ENCODE measurements at regions of chr11 and their contacts with region 1.

Region 1: GRCh38 chr11:120682866-120683265 is 171.3 kb downstream of the GRIK4 start:
- DNase-seq: no peak
- H3K4me3 ChIP-seq: no peak overlapping the region
- H3K27ac ChIP-seq: no peak overlapping the region
- H3K4me1 ChIP-seq: no peaks in the 10 kb centered on the region
- H3K27me3 ChIP-seq: peaks cover 3 to 6% of the 10 kb centered on the region in 2 experiments
- CTCF ChIP-seq: no peak
- POLR2A ChIP-seq: no peak

Region 2: GRCh38 chr11:120335908-120336640 is 346.8 kb before region 1 on chr11 and contains the start of gene ARHGEF12:
- CTCF ChIA-PET with region 1: interaction called, 4 read pairs
- POLR2A ChIA-PET with region 1: no interaction called
- dilution Hi-C with region 1: no loop called
- intact Hi-C with region 1: loop called (anchors 10 kb)
- DNase-seq: peak; percentile 95
- H3K4me3 ChIP-seq: peak within 1 kb of the TSS; percentile 82 to 98 (median 96)
- H3K27ac ChIP-seq: peak within 1 kb of the TSS; percentile 87
- H3K4me1 ChIP-seq: peaks cover 40% of the 10 kb centered on the region
- H3K27me3 ChIP-seq: no peaks in the 10 kb centered on the region
- CTCF ChIP-seq: peak; percentile 42 to 56
- POLR2A ChIP-seq: peak; percentile 80
- total RNA-seq, gene ARHGEF12: 117 and 125 TPM in 2 replicates

Region 3: GRCh38 chr11:120511116-120511819 is 171.6 kb before region 1 on chr11 and contains the start of gene GRIK4:
- CTCF ChIA-PET with region 1: interaction called, 289 read pairs
- POLR2A ChIA-PET with region 1: no interaction called
- dilution Hi-C with region 1: no loop called
- intact Hi-C with region 1: loop called (anchors 1 kb)
- DNase-seq: peak; percentile 64
- H3K4me3 ChIP-seq: peak within 1 kb of the TSS in 1 of 3 experiments; percentile 25
- H3K27ac ChIP-seq: no peak within 1 kb of the TSS
- H3K4me1 ChIP-seq: no peaks in the 10 kb centered on the region
- H3K27me3 ChIP-seq: peaks cover 7 to 12% of the 10 kb centered on the region in 2 experiments
- CTCF ChIP-seq: peak; percentile 89 to 94
- POLR2A ChIP-seq: no peak
- total RNA-seq, gene GRIK4: 0.74 and 1.6 TPM in 2 replicates

Region 4: DNA sequence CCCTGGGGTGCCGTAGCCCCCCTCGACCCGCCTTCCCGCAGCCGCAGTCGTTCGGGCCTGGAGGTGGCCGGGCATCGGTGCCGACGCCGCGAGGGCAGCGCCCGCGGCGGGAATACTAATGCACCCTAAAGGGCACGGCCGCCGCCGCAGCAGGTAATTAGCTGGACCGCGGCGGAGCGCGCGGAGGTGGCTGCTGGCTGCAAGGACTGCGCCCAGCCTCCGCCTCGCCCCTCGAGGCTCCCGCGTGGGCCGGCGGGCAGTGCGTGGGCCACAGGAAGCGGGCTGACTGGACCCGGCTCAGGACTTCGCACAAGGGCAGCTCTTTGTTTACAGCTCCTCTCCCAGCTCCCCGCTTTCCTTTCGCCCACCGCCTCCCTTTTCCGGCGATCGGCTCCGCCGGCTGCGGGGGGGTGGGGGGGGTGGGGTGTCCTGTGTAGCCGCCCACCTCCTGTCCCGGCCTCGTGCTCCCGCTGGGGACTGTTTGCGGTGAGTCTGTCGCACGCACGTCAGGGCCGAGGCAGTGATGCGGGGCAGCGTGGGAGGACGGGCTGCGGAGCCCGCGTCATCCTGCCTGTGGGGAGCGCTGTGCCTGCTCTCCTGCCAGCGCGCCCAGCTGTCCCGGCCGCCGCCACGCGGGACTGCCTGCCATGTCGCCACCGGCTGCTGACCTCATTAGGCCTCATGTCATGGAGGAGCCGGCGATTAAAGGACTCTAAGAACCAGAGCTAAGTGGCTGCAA is 118.1 kb before region 1 on chr11:
- CTCF ChIA-PET with region 1: interaction called, 27 read pairs
- POLR2A ChIA-PET with region 1: no interaction called
- dilution Hi-C with region 1: no loop called
- intact Hi-C with region 1: no loop called
- DNase-seq: peak; percentile 45
- H3K4me3 ChIP-seq: peak overlapping the region in 2 of 3 experiments; percentile 24 to 39
- H3K27ac ChIP-seq: peak overlapping the region; percentile 88
- H3K4me1 ChIP-seq: peaks cover 25% of the 10 kb centered on the region
- H3K27me3 ChIP-seq: no peaks in the 10 kb centered on the region
- CTCF ChIP-seq: peak in 1 of 2 donors; percentile 30
- POLR2A ChIP-seq: no peak

Region 5: DNA sequence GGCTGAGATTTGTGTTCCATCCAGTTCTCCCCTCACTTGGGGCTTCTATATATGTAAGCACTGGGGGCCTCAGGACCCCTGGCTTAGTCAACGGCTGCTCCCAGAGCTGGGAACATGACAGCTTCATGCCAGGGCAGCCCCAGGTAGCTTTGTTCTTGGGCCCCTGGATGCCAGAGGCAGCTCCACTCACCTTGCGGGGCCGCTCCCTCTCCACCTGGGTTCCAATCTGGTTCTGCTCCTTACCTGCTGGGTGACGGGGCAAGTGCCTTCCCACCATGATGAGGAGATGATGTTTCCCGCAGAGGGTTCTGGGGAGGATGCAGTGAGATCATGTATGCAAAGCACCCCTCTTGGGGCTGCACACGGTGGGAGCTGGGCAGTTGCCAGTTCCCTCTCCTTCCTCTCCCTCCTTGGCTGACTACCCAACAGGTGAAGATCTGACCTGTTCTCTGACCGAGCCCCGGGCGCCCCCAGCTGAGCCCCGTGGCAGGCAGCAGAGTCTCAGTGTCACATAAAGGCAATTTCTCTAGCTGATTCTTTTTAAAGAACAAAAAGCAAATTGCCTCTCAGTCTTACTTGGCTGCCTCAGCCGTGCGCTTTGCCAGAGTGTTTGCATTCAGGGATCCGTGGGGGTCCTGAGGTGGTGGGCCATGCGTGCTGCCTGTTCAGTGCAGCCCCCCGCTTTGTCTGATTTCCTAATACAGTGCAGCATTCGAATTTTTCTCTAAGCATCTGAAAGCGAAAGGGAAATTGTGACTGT is 85.7 kb before region 1 on chr11:
- CTCF ChIA-PET with region 1: no interaction called
- POLR2A ChIA-PET with region 1: no interaction called
- dilution Hi-C with region 1: no loop called
- intact Hi-C with region 1: no loop called
- DNase-seq: no peak
- H3K4me3 ChIP-seq: no peak overlapping the region
- H3K27ac ChIP-seq: no peak overlapping the region
- H3K4me1 ChIP-seq: no peaks in the 10 kb centered on the region
- H3K27me3 ChIP-seq: no peaks in the 10 kb centered on the region
- CTCF ChIP-seq: no peak
- POLR2A ChIP-seq: no peak

Region 6: DNA sequence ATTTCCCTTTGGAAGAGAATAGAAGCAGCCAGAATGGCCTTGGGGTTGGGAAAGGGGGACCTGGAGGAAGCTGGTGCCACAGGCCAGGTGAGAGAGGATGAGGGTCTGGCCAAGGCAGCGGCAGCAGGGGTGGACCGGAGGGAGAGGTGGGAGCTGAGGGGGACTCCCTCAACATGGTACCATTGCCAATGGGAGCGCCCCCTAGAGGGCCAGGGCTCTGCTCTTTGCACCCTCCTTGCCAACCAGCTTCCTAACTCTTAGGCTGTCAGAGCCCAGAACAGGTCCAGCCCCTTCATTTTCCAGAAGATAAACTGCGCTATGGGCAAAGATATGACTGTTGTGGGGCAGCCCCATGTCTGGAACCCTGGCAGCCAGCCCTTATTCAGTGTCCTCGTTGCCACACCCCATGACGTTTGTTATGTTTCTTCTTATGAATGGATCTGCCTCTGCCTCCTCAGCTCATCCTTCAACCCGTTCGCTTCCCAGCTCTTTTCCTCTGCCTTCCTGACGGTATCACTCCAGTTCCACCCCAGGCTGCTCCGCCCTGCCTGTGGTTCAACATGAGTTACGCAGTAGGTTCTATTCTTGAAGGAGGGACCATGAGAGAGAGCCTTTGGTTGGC is 13.8 kb after region 1 on chr11:
- CTCF ChIA-PET with region 1: interaction called, 40 read pairs
- POLR2A ChIA-PET with region 1: no interaction called
- dilution Hi-C with region 1: no loop called
- intact Hi-C with region 1: no loop called
- DNase-seq: no peak
- H3K4me3 ChIP-seq: no peak overlapping the region
- H3K27ac ChIP-seq: no peak overlapping the region
- H3K4me1 ChIP-seq: no peaks in the 10 kb centered on the region
- H3K27me3 ChIP-seq: no peaks in the 10 kb centered on the region
- CTCF ChIP-seq: no peak
- POLR2A ChIP-seq: no peak

Region 7: DNA sequence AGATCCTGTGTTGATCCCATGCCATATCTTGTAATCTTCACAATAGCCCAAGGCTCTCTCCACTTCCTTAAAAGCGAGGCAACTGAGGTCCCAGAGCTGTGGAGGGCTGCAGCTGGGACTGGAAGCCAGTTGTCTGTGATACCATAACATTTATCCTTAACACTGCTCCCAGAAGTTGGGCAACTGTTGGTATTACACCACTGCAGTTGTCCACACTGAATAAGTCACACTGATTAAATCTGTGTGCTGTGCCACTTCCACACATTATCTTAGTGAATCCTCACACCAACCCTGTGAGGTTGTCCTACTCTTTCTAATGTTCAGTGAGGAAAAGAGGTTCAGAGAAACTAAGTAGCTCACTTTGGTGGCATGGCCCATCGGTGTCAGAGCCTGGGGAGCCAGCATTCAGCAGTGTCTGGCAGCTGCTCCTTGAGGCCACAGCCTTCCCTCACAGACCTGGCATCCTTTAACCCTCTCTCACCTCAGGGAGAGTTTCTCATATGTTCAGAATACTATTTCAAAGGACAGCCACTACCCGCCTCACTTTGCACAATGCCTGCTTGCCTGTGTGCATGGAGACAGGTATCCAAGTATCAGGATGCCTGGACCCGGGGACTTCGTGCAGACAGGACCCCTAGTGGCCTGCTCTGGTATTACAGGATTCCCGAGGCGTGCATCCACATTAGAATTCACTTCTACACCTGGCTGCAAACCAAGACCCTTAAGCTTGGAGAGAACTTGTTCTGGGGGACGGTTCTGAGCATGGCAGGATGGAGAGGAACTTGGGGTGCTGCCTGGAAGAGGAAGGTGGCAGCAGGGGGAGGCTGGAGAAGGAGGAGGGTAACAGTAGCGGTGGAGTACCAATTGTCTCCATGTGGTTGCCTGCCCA is 119.2 kb after region 1 on chr11:
- CTCF ChIA-PET with region 1: interaction called, 34 read pairs
- POLR2A ChIA-PET with region 1: no interaction called
- dilution Hi-C with region 1: no loop called
- intact Hi-C with region 1: loop called (anchors 1 kb)
- DNase-seq: peak; percentile 58
- H3K4me3 ChIP-seq: no peak overlapping the region
- H3K27ac ChIP-seq: no peak overlapping the region
- H3K4me1 ChIP-seq: peaks cover 2% of the 10 kb centered on the region
- H3K27me3 ChIP-seq: no peaks in the 10 kb centered on the region
- CTCF ChIP-seq: peak; percentile 89 to 91
- POLR2A ChIP-seq: no peak

Region 8: GRCh38 chr11:121194731-121195596 is 512.1 kb after region 1 on chr11:
- CTCF ChIA-PET with region 1: interaction called, 16 read pairs
- POLR2A ChIA-PET with region 1: no interaction called
- dilution Hi-C with region 1: no loop called
- intact Hi-C with region 1: no loop called
- DNase-seq: peak; percentile 64
- H3K4me3 ChIP-seq: peak overlapping the region in 1 of 3 experiments; percentile 22
- H3K27ac ChIP-seq: no peak overlapping the region
- H3K4me1 ChIP-seq: peaks cover 5% of the 10 kb centered on the region
- H3K27me3 ChIP-seq: no peaks in the 10 kb centered on the region
- CTCF ChIP-seq: peak; percentile 68 to 76
- POLR2A ChIP-seq: no peak